ENCODE measurements at regions of chr3 and their contacts with region 1.

Region 1: DNA sequence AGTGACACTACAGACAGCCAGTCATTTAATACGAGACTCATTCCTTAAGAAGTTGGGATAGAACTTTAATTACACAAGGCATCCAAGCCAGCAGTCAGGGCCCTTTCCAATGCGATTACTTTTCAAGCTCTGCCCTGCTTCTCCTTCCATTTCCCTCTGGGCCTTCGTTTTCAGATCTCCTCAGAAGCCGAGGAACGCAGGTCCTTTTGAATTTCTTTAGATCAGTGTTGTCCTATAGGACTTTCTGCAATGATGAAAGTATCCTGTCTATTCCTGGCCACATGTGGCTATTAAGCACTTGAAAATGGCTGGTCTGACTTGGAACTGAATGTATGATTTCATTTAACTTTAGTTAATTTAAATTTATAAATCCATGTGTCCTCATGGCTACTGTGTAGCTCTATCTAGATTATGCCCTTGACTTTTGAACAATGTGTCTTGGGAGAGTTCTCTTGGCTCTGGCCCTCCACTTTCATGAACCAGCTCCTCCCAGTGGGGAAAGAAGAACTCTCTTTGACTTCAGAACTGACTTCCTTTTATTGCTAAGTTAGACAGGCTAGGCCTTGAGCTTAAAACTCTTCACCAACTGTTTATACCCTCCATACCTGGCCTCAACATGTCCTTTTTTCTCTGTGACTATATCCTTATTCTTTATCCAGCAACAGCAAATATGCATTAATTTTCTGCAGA is 22.6 kb downstream of the TGFBR2 start:
- DNase-seq: peak; percentile 55
- H3K4me3 Mint-ChIP-seq: peak overlapping the region; percentile 53
- H3K27ac Mint-ChIP-seq: peak overlapping the region; percentile 98
- H3K4me1 Mint-ChIP-seq: peaks cover 91% of the 10 kb centered on the region
- H3K27me3 Mint-ChIP-seq: no peaks in the 10 kb centered on the region

Region 2: GRCh38 chr3:30611613-30612436 is 17.2 kb before region 1 on chr3:
- CTCF ChIA-PET with region 1: interaction called, 42 read pairs
- intact Hi-C with region 1: loop called (anchors 1 kb)
- DNase-seq: peak; percentile 25
- H3K4me3 Mint-ChIP-seq: peak overlapping the region; percentile 83
- H3K27ac Mint-ChIP-seq: peak overlapping the region; percentile 98
- H3K4me1 Mint-ChIP-seq: peaks cover 57% of the 10 kb centered on the region
- H3K27me3 Mint-ChIP-seq: no peaks in the 10 kb centered on the region

Region 3: GRCh38 chr3:30667280-30667651 is 38.2 kb after region 1 on chr3:
- CTCF ChIA-PET with region 1: no interaction called
- intact Hi-C with region 1: loop called (anchors 1 kb)
- DNase-seq: peak; percentile 67
- H3K4me3 Mint-ChIP-seq: peak overlapping the region; percentile 15
- H3K27ac Mint-ChIP-seq: peak overlapping the region; percentile 93
- H3K4me1 Mint-ChIP-seq: peaks cover 95% of the 10 kb centered on the region
- H3K27me3 Mint-ChIP-seq: no peaks in the 10 kb centered on the region